ENCODE measurements at regions of chr2 and their contacts with region 1.

Region 1: GRCh38 chr2:195891081-195891480 is 177.6 kb downstream of the DNAH7 start:
- DNase-seq: no peak
- ATAC-seq: no peak
- H3K4me3 ChIP-seq: no peak overlapping the region
- H3K27ac ChIP-seq: no peak overlapping the region
- H3K4me1 ChIP-seq: no peaks in the 10 kb centered on the region
- H3K27me3 ChIP-seq: no peaks in the 10 kb centered on the region
- CTCF ChIP-seq: no peak
- EP300 ChIP-seq: no peak
- POLR2A ChIP-seq: no peak
- RAD21 ChIP-seq: no peak

Region 2: DNA sequence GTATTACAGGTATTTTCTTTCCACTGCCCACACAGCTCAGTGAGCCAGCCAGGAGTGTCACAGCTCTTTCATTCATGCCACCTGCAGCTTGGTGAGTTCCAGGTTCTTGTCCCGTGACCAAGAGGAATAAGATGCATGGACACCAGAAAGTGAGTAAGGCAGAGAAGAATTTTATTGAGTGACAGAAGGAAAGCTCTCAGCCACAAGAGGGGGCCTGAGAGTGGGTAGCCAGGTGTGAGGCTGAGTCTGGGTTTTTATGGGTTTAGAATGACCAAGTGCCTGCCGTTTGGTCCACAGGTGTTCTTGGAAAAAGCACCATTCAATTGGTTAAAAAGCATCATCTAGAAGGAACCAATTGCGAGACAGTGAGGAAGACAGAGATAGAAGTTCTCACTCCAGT is 1331.1 kb before region 1 on chr2:
- CTCF ChIA-PET with region 1: no interaction called
- POLR2A ChIA-PET with region 1: no interaction called
- in situ Hi-C with region 1: no loop called
- intact Hi-C with region 1: loop called (anchors 5 kb)
- DNase-seq: no peak
- ATAC-seq: no peak
- H3K4me3 ChIP-seq: no peak overlapping the region
- H3K27ac ChIP-seq: no peak overlapping the region
- H3K4me1 ChIP-seq: no peaks in the 10 kb centered on the region
- H3K27me3 ChIP-seq: no peaks in the 10 kb centered on the region
- CTCF ChIP-seq: no peak
- EP300 ChIP-seq: no peak
- POLR2A ChIP-seq: no peak
- RAD21 ChIP-seq: no peak

Measured in HepG2 (cell line).